Astrocyte of the cerebellum (primary cell): ENCODE measurements at regions of chr2 and their contacts with region 1.

Region 1: DNA sequence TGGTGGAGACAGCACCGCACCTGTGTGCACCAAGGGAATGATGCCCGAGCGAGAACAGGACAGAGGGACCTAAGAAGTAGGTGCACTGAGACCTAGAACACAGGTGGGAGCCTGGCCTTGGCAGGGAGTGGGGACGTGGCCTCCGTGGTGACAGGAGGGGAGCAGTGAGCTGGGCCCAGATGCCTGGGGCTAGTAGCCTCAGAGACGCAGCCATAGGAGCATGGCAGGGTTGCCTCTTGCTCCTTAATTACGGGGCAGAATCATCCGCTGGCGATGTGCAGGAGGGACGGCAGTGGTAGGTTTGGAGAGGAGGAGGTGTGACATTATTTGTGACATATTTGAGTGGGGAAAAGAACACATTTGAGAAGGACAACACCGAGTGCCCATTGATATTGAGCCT is 57.0 kb upstream of the HPCAL1 start:
- DNase-seq: no peak
- H3K4me3 ChIP-seq: no peak overlapping the region
- CTCF ChIP-seq: no peak

Region 2: DNA sequence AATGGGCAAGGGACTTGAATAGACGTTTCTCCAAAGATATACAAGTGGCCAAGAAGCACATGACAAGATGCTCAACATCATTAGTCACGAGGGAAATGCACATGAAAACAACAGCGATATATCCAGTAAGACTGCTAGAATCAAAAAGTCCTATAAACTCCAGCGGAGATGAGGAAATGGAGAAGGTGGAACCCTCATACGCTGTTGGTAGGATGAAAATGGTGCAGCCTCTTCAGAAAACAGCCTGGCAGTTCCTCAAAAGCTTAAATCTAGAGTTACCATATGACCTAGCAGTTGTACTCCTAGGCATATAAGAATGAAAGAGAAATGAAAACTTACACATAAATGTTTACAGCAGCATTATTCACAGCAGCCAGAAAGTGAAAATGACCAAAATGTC is 105.1 kb after region 1 on chr2:
- in situ Hi-C with region 1: loop called (anchors 5 kb)
- DNase-seq: no peak
- H3K4me3 ChIP-seq: no peak overlapping the region
- CTCF ChIP-seq: no peak